ENCODE measurements at regions of chr11 and their contacts with region 1.

Region 1: GRCh38 chr11:73661035-73661628 is 14.8 kb downstream of the PLEKHB1 start:
- DNase-seq: peak; percentile 94
- CTCF ChIP-seq: peak; percentile 99

Region 2: GRCh38 chr11:73350908-73351636 is 310.1 kb before region 1 on chr11:
- in situ Hi-C with region 1: loop called (anchors 25 kb)
- DNase-seq: peak; percentile 90
- CTCF ChIP-seq: peak; percentile 95

Region 3: DNA sequence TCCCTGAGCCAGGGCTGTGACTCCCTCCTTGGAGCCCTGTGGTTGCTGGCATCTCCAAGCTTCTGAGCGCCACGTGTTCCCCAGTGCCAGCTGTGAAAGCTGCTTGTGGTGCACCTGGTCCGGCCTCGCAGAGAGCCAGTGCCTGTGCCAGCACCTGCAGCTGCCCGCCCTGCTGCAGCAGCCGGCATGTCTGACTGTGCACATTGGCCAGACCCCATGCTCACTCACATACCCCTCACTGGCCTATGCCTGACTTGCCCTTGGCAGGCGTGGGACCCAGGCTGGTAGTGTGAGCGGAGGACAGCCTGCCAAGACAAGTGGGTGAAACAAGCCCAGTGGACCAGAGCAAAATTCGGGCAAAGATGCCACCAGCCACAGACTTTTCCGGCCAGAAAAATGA is 136.3 kb after region 1 on chr11:
- in situ Hi-C with region 1: no loop called
- DNase-seq: no peak
- CTCF ChIP-seq: no peak

Region 4: GRCh38 chr11:74672956-74673692 is 1012.0 kb after region 1 on chr11:
- in situ Hi-C with region 1: no loop called
- DNase-seq: no peak
- CTCF ChIP-seq: no peak